Activated B cell treated with CpG ODN at 0.5 μM for 24 hours (primary cell): ENCODE measurements at regions of chr5 and their contacts with region 1.

Region 1: GRCh38 chr5:160467555-160468362 is 46.1 kb downstream of the PTTG1 start:
- DNase-seq: peak; percentile 82
- ATAC-seq: peak; percentile 86
- H3K4me3 Mint-ChIP-seq: peak overlapping the region; percentile 100
- H3K27ac Mint-ChIP-seq: peak overlapping the region; percentile 100
- H3K4me1 Mint-ChIP-seq: peaks cover 81% of the 10 kb centered on the region
- H3K27me3 Mint-ChIP-seq: no peaks in the 10 kb centered on the region
- CTCF ChIP-seq: no peak

Region 2: DNA sequence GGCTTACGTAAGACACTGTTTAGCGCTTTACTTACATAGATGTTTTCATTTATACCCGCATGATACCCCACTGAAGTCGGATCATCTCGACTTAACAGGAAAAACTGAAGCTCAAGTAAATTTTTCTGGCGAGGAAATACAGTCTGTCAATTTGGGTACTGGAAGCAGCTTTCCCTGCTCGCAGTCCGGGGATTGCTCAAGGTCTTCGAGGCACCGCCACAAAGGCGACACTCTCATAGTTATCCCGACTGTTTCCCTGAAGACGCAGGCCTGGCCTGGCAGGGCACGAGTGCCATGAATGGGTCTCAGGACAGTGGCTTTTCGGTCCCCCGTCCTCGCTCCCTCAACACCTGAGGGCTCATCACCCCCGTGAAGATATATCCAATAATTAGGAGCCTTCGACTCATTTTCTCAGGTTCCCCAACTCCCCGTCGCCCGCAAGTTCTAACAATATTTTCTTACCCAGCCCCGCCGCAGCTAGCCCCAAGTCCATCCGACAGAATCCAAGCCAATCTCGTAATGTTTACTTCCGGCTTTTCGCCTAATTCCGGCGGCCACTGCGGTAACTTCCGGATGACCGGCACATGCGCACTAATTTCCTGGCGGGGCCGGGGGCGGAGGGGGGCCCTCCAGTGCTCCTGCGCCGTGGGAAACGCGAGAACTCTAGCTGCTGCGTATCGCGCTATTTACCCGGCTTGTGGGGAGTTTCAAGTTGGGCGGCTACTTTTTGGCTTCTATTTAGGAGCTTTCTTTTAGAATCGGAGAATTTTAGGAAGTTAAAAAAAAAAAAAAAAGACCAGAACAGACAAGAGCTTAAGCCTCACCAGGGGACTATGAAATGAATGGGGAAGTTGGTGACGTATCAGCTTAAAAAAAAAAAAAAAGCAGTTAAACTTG is 49.0 kb before region 1 on chr5 and contains the start of gene SLU7:
- CTCF ChIA-PET with region 1: interaction called, 4 read pairs
- POLR2A ChIA-PET with region 1: interaction called, 73 read pairs
- intact Hi-C with region 1: loop called (anchors 1 kb)
- DNase-seq: peak; percentile 88
- ATAC-seq: peak; percentile 81
- H3K4me3 Mint-ChIP-seq: peak within 1 kb of the TSS; percentile 91
- H3K27ac Mint-ChIP-seq: peak within 1 kb of the TSS; percentile 90
- H3K4me1 Mint-ChIP-seq: peaks cover 72% of the 10 kb centered on the region
- H3K27me3 Mint-ChIP-seq: no peaks in the 10 kb centered on the region
- CTCF ChIP-seq: no peak
- total RNA-seq, gene SLU7: 58.5 and 59.3 TPM in 2 replicates

Region 3: DNA sequence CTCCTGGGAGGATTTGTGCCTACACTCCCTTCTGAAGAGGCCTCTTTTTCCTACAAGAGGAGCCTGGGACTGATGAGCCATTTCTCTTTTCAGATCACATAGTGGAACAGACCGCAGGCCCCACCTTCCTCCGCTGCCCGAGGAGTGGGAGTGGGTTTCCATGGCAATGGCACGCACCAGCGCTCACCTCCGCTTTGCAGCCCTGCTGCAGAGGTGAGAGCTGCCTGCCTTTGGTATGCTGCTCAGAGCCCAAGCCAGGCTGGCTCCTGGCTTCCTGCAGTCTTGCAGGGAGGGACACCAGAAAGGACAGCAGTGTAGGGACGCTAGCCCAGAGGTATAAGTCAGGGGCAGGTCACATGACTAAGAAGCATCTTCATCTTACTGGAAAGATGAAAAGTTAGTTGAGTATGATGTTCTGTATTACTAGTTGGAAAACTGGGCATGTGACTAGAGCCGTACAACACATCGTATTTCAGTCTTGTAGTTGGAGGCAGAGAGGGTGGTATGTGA is 33.7 kb before region 1 on chr5:
- CTCF ChIA-PET with region 1: interaction called, 132 read pairs
- POLR2A ChIA-PET with region 1: interaction called, 154 read pairs
- intact Hi-C with region 1: loop called (anchors 1 kb)
- DNase-seq: peak; percentile 59
- ATAC-seq: peak; percentile 72
- H3K4me3 Mint-ChIP-seq: peak overlapping the region; percentile 48
- H3K27ac Mint-ChIP-seq: peak overlapping the region; percentile 3
- H3K4me1 Mint-ChIP-seq: peaks cover 62% of the 10 kb centered on the region
- H3K27me3 Mint-ChIP-seq: no peaks in the 10 kb centered on the region
- CTCF ChIP-seq: no peak

Region 4: GRCh38 chr5:160450164-160450932 is 17.4 kb before region 1 on chr5:
- CTCF ChIA-PET with region 1: interaction called, 3 read pairs
- POLR2A ChIA-PET with region 1: interaction called, 26 read pairs
- intact Hi-C with region 1: no loop called
- DNase-seq: no peak
- ATAC-seq: peak; percentile 54
- H3K4me3 Mint-ChIP-seq: no peak overlapping the region
- H3K27ac Mint-ChIP-seq: no peak overlapping the region
- H3K4me1 Mint-ChIP-seq: peaks cover 29% of the 10 kb centered on the region
- H3K27me3 Mint-ChIP-seq: peaks cover 3% of the 10 kb centered on the region
- CTCF ChIP-seq: no peak

Region 5: GRCh38 chr5:160486573-160486972 is 18.8 kb after region 1 on chr5:
- CTCF ChIA-PET with region 1: interaction called, 3 read pairs
- POLR2A ChIA-PET with region 1: interaction called, 11 read pairs
- intact Hi-C with region 1: loop called (anchors 2 kb)
- DNase-seq: no peak
- ATAC-seq: peak; percentile 81
- H3K4me3 Mint-ChIP-seq: peak overlapping the region; percentile 20
- H3K27ac Mint-ChIP-seq: peak overlapping the region; percentile 47
- H3K4me1 Mint-ChIP-seq: peaks cover 29% of the 10 kb centered on the region
- H3K27me3 Mint-ChIP-seq: no peaks in the 10 kb centered on the region
- CTCF ChIP-seq: no peak

Region 6: GRCh38 chr5:160508780-160509361 is 41.1 kb after region 1 on chr5:
- CTCF ChIA-PET with region 1: interaction called, 6 read pairs
- POLR2A ChIA-PET with region 1: interaction called, 10 read pairs
- intact Hi-C with region 1: loop called (anchors 1 kb)
- DNase-seq: no peak
- ATAC-seq: peak; percentile 86
- H3K4me3 Mint-ChIP-seq: no peak overlapping the region
- H3K27ac Mint-ChIP-seq: no peak overlapping the region
- H3K4me1 Mint-ChIP-seq: peaks cover 26% of the 10 kb centered on the region
- H3K27me3 Mint-ChIP-seq: peaks cover 6% of the 10 kb centered on the region
- CTCF ChIP-seq: peak; percentile 33

Region 7: GRCh38 chr5:160627921-160628618 is 160.3 kb after region 1 on chr5:
- CTCF ChIA-PET with region 1: no interaction called
- POLR2A ChIA-PET with region 1: no interaction called
- intact Hi-C with region 1: no loop called
- DNase-seq: no peak
- ATAC-seq: no peak
- H3K4me3 Mint-ChIP-seq: no peak overlapping the region
- H3K27ac Mint-ChIP-seq: no peak overlapping the region
- H3K4me1 Mint-ChIP-seq: no peaks in the 10 kb centered on the region
- H3K27me3 Mint-ChIP-seq: peaks cover 8% of the 10 kb centered on the region
- CTCF ChIP-seq: no peak